Transverse colon (tissue), 4 donors: ENCODE measurements at regions of chr12 and their contacts with region 1.

Region 1: DNA sequence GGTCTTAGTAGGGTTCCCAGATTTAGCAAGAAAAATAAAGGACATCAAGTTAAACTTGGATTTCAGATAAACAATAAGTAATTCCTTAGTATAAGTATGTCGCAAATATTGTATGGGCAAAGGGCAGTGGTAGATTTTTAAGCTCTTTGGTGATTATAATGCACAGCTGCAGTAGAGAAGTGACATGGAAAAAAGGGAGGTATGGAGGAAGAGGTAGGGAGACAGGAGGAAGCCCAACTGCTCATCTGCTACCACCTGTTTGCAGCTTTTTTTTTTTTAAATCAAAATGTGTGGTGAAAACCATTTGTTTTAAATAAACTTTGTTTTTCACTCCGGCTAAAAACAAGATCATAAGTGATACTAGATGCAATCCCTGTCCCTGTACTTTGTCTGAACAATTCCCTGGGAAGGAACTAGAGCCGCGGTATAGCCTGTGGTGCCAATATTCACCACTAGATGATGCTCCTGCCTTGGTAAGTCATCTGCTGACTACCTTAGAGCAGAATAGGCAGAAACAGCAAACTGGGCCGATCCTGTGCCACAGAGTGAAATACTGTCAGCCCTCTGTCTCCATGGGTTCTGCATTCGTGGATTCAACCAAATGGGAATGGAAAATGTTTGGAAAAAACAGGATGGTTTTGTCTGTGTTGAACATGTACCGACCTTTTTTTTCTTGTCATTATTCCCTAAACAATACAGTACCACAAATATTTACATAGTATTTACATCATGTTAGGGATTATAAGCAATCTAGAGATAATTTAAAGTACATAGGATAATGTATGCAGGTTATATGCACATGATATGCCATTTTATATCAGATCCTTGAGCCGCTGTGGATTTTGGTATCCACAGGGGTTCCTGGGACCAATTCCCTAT is 62.4 kb upstream of the PLBD1 start:
- DNase-seq: peak; percentile 84
- H3K4me3 ChIP-seq: no peak overlapping the region
- H3K27ac ChIP-seq: peak overlapping the region in 3 of 4 donors; percentile 45 to 57 (median 46)
- H3K4me1 ChIP-seq: peaks cover 0 to 23% (median 10%) of the 10 kb centered on the region in 4 donors
- H3K27me3 ChIP-seq: no peaks in the 10 kb centered on the region
- CTCF ChIP-seq: peak; percentile 91 to 96 (median 95)
- EP300 ChIP-seq: no peak
- POLR2A ChIP-seq: no peak

Region 2: DNA sequence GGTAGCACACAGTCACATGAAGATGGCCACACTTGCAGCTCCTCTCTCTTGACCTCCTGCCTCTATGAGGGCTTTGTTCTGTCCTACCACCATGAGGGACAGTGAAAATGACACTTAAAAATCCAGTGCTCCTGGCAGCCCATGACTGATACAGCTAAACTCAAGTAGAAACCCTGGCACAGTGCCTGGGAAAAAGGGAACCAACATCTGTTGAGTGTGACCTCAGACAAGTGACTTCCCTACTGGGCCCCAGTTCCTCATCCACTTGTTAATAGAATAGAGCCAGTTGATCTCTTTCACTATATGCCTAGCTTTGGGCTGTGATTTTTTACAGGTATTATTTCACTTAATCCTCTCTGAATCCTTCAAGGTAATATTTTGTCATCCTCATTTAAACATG is 61.5 kb after region 1 on chr12:
- in situ Hi-C with region 1: loop called in 1 of 4 experiments (anchors 10 kb)
- intact Hi-C with region 1: no loop called
- DNase-seq: peak; percentile 49
- H3K4me3 ChIP-seq: no peak overlapping the region
- H3K27ac ChIP-seq: no peak overlapping the region
- H3K4me1 ChIP-seq: peaks cover 0 to 10% (median 4%) of the 10 kb centered on the region in 4 donors
- H3K27me3 ChIP-seq: no peaks in the 10 kb centered on the region
- CTCF ChIP-seq: no peak
- EP300 ChIP-seq: no peak
- POLR2A ChIP-seq: no peak